Astrocyte of the spinal cord (primary cell): ENCODE measurements at regions of chr9 and their contacts with region 1.

Region 1: GRCh38 chr9:18473652-18474279 is at the start of gene ADAMTSL1:
- DNase-seq: peak; percentile 90
- H3K4me3 ChIP-seq: peak within 1 kb of the TSS; percentile 59
- CTCF ChIP-seq: no peak

Region 2: GRCh38 chr9:18255158-18255629 is 218.6 kb before region 1 on chr9:
- in situ Hi-C with region 1: loop called (anchors 25 kb)
- DNase-seq: peak; percentile 90
- H3K4me3 ChIP-seq: no peak overlapping the region
- CTCF ChIP-seq: peak; percentile 82

Region 3: DNA sequence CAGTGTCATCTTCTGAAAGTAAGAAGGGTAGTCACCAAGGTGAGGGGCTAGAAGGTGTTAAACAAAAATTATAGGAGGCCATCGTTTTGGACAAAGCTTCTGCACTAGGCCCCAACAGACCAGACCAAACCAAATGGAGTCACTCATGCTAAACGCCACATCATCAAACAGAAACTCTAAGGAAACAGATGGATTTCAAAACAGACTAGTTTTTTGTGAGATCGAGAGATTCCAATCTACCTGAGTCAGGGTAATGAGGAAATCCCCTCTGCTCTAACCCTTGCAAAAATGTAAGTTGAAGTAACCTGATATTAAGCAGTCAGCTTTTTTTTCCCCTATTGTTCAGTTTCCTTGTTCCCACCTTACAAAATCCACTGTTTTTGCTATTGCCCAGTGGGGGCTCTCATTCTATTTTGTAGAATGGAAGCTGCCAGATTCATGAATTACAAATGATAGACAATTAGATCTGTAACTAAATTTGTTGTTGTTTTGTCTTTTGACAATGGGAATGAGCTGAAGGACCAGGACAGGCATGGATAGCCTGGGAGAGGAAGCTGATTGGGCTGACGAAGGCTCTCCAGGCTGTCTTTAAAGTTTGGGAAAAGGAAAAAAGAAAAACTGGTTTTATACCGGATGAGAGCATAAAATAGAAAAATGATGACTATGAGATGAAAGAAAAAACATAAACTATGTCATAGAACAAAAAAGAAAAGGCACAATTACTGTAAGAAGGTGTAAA is 94.5 kb before region 1 on chr9:
- in situ Hi-C with region 1: no loop called
- DNase-seq: peak; percentile 89
- H3K4me3 ChIP-seq: no peak overlapping the region
- CTCF ChIP-seq: no peak